AG04450 (cell line): ENCODE measurements at regions of chr5 and their contacts with region 1.

Region 1: DNA sequence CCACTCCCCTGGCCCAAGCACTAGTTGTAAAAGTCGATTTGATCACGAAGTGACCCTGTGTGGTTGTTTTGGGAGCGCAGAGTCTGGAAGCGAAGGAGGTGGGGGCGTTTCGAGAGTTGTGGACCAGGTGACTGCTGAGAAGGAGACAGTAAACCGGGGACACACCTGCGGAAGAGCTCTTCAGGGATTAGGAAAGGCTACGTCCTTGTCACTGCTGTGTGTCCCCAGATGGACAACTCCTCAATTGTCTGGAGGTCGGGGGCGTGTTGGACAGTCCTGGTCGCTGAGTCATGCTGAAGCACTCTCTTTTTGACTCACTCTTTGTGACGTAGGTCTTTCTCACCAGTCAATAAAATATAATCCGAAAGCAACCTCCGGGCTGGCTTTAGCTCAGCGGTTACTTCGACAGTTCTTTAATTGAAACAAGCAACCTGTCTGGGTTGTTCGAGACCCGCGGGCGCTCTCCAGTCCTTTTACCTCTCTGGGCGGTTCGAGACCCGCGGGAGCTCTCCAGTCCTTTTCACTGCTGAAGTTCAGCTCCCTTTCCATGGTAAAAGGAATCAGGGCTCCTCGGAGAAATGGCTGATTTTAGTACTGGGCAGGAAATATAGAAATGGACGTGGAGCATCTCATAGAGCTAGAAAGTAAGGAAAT is 10.8 kb downstream of the ZMAT2 start:
- DNase-seq: peak; percentile 95
- H3K4me3 ChIP-seq: peak overlapping the region; percentile 60
- H3K27ac ChIP-seq: peak overlapping the region; percentile 93
- H3K27me3 ChIP-seq: no peaks in the 10 kb centered on the region
- CTCF ChIP-seq: no peak

Region 2: GRCh38 chr5:140690941-140691924 is 19.8 kb before region 1 on chr5 and contains the starts of genes HARS1 and HARS2:
- CTCF ChIA-PET with region 1: no interaction called
- POLR2A ChIA-PET with region 1: interaction called, 14 read pairs
- DNase-seq: peak; percentile 86
- H3K4me3 ChIP-seq: peak within 1 kb of the TSS; percentile 99
- H3K27ac ChIP-seq: peak within 1 kb of the TSS; percentile 77
- H3K27me3 ChIP-seq: no peaks in the 10 kb centered on the region
- CTCF ChIP-seq: no peak
- polyA plus RNA-seq, gene HARS1: 93.6 and 98.8 TPM in 2 replicates
- polyA plus RNA-seq, gene HARS2: 39.9 and 48.6 TPM in 2 replicates

Region 3: GRCh38 chr5:140700177-140701144 is 10.6 kb before region 1 on chr5 and contains the start of gene ZMAT2:
- CTCF ChIA-PET with region 1: interaction called, 3 read pairs
- POLR2A ChIA-PET with region 1: interaction called, 12 read pairs
- DNase-seq: peak; percentile 96
- H3K4me3 ChIP-seq: peak within 1 kb of the TSS; percentile 92
- H3K27ac ChIP-seq: peak within 1 kb of the TSS; percentile 39
- H3K27me3 ChIP-seq: no peaks in the 10 kb centered on the region
- CTCF ChIP-seq: no peak
- polyA plus RNA-seq, gene ZMAT2: 66.6 and 82.8 TPM in 2 replicates

Region 4: DNA sequence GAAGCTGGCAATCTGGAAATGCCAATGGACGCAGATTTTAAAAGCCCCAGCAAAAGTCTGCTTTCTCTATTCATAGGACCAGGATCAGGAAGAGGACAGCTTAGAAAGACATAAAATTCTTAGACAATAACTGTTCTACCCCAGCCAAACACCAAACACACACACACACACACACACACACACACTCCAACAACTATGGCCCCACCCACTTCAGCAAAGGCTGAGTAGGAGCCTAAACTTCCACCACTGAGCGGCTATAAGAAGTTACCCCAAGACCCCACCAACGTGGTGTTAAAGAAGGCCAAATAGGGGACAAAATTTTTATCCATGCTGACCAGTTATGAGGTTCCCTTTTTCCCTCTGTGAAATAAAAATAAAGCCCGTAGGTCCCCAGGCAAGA is 22.1 kb after region 1 on chr5:
- CTCF ChIA-PET with region 1: no interaction called
- POLR2A ChIA-PET with region 1: no interaction called
- DNase-seq: no peak
- H3K4me3 ChIP-seq: no peak overlapping the region
- H3K27ac ChIP-seq: no peak overlapping the region
- H3K27me3 ChIP-seq: no peaks in the 10 kb centered on the region
- CTCF ChIP-seq: no peak